ENCODE measurements at regions of chr7 and their contacts with region 1.

Region 1: DNA sequence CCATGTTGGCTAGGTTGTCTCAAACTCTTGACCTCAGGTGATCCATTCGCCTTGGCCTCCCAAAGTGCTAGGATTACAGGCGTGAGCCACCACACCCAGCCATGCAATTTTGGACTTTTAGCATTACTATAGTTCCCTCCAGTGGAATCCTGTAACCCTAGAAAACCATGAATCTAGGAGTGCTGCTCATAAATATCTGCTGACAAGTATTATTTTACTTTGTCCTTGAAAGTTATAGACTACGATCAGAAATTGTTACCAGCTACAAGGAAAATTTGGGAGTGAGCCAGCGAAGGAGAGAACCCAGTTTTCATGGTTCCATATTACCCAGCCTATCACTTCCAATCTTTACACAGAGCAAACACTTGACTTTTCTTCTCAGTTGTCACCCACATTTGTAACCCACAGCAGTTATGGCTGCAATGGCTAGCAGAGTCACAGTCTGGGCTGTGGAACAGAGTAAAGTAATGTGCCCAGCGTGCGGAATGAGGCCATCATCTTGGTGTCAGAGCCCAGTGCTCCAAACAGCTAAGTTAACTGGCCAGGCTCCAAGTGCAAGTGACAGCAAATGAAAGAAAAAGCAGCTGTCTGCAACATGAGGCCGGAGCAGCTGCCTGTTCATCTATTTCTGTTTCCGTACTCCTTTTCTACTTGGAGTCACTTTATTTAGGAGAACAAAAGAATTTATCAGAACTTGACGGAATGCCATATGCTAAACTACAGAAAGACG is 29.9 kb downstream of the ZC3HC1 start:
- DNase-seq: no peak
- H3K4me3 ChIP-seq: no peak overlapping the region
- H3K27ac ChIP-seq: no peak overlapping the region
- H3K4me1 ChIP-seq: no peaks in the 10 kb centered on the region
- H3K27me3 ChIP-seq: no peaks in the 10 kb centered on the region
- CTCF ChIP-seq: no peak
- POLR2A ChIP-seq: no peak

Region 2: GRCh38 chr7:129644634-129645230 is 376.5 kb before region 1 on chr7:
- intact Hi-C with region 1: no loop called
- DNase-seq: no peak
- H3K4me3 ChIP-seq: no peak overlapping the region
- H3K27ac ChIP-seq: no peak overlapping the region
- H3K4me1 ChIP-seq: no peaks in the 10 kb centered on the region
- H3K27me3 ChIP-seq: no peaks in the 10 kb centered on the region
- CTCF ChIP-seq: peak in 3 of 4 experiments; percentile 21 to 41 (median 38)
- POLR2A ChIP-seq: no peak

Region 3: DNA sequence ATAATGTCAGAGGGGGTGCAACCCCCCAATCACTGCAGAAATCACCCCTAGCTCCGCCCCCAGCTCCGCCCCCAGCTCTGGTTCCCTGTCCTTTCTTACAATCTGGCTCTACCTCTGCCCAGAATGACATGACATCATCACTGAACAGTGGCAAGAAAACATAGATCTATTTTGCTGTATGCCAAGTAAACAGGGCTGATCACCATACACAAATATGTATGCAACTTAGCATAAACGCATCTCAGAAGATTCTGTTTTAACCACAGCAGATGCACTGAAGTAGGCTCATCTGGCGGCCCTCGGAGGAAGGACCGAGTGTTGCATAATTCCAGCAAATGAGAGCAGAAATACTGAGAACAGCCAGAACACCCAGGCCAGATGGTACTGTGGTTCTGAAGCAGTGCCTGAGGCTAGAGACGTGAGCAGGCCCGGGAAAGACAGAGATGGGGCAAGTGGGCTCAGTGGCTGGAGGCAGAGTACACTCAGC is 1006.1 kb after region 1 on chr7:
- intact Hi-C with region 1: loop called (anchors 10 kb)
- DNase-seq: peak; percentile 42 to 56
- H3K4me3 ChIP-seq: no peak overlapping the region
- H3K27ac ChIP-seq: peak overlapping the region in 1 of 2 donors; percentile 42
- H3K4me1 ChIP-seq: peaks cover 4 to 18% of the 10 kb centered on the region in 2 donors
- H3K27me3 ChIP-seq: no peaks in the 10 kb centered on the region
- CTCF ChIP-seq: no peak
- POLR2A ChIP-seq: no peak

Measured in uterus (tissue), 4 donors.